ENCODE measurements at regions of chr10 and their contacts with region 1.

Region 1: DNA sequence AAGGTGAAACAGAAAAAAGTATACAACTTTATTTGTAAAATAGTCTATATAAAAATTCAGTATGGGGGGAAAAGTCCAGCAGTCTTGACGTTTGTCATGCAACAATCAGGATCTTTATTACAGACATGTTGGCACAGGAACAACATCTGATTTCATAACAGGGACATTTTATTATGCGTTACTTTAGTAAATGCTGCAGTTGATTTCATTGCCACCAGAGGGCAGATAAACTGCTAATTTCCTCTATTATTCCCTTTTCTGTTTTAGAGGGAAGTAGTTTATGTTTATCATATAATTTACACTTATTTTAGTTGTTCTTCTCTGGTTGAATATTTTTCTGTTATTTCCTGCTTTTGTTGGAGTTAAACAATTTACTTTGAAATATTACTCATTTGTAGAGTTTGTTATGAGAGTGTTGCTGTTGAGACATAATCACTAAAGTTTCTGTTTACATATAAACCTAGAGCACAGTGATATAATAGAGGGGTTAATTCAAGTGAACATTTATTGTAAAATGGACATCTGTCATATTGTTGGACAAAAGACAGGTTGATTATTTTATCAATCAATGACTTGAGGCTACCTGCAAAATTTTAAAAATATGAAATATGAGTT is 3.3 kb downstream of the PLXDC2 start:
- DNase-seq: peak in 1 of 2 donors; percentile 78
- ATAC-seq: no peak
- H3K4me3 ChIP-seq: peak overlapping the region in 8 of 10 donors; percentile 59 to 94 (median 84)
- H3K27ac ChIP-seq: peak overlapping the region in 7 of 10 donors; percentile 2 to 95 (median 53)
- H3K4me1 ChIP-seq: peaks cover 0 to 50% (median 19%) of the 10 kb centered on the region in 9 donors
- H3K27me3 ChIP-seq: peaks cover 0 to 16% (median 2%) of the 10 kb centered on the region in 7 donors
- CTCF ChIP-seq: peak; percentile 75 to 94 (median 85)

Region 2: GRCh38 chr10:19874773-19875172 is 55.2 kb after region 1 on chr10:
- intact Hi-C with region 1: loop called in 1 of 10 experiments (anchors 10 kb)
- DNase-seq: no peak
- ATAC-seq: peak in 1 of 8 donors; percentile 44
- H3K4me3 ChIP-seq: no peak overlapping the region
- H3K27ac ChIP-seq: no peak overlapping the region
- H3K4me1 ChIP-seq: peaks cover 0 to 30% (median 12%) of the 10 kb centered on the region in 9 donors
- H3K27me3 ChIP-seq: no peaks in the 10 kb centered on the region
- CTCF ChIP-seq: no peak

Region 3: GRCh38 chr10:19944911-19945663 is 125.6 kb after region 1 on chr10:
- intact Hi-C with region 1: loop called in 2 of 10 experiments (anchors 5 to 10 kb)
- DNase-seq: peak; percentile 49 to 50
- ATAC-seq: peak; percentile 43 to 89 (median 66)
- H3K4me3 ChIP-seq: no peak overlapping the region
- H3K27ac ChIP-seq: peak overlapping the region in 9 of 10 donors; percentile 1 to 72 (median 47)
- H3K4me1 ChIP-seq: peaks cover 20 to 70% (median 45%) of the 10 kb centered on the region in 9 donors
- H3K27me3 ChIP-seq: no peaks in the 10 kb centered on the region
- CTCF ChIP-seq: no peak

Region 4: DNA sequence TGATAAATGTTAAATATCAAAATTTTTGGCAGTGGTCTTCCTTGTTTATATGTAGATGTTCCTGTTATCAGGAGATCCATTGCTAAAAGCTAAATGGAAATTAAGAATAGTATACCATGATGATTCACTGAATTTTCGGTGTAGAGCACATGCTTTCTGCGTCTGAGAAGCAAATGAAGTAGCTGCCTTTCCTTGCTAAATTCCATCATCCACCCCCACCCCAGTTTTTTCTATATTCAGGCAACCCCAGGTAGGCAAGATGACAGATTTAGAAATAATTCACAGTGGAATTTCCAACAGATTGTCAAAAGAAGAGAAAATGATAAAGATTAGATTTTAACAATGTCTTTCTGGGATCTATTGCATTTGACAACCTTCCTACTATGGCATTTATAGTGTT is 228.6 kb after region 1 on chr10:
- intact Hi-C with region 1: loop called in 1 of 10 experiments (anchors 5 kb)
- DNase-seq: no peak
- ATAC-seq: no peak
- H3K4me3 ChIP-seq: no peak overlapping the region
- H3K27ac ChIP-seq: no peak overlapping the region
- H3K4me1 ChIP-seq: peaks cover 0 to 7% (median 0%) of the 10 kb centered on the region in 9 donors
- H3K27me3 ChIP-seq: no peaks in the 10 kb centered on the region
- CTCF ChIP-seq: no peak

Region 5: GRCh38 chr10:20094226-20094976 is 274.9 kb after region 1 on chr10:
- intact Hi-C with region 1: loop called in 3 of 10 experiments (anchors 5 to 10 kb)
- DNase-seq: no peak
- ATAC-seq: no peak
- H3K4me3 ChIP-seq: no peak overlapping the region
- H3K27ac ChIP-seq: no peak overlapping the region
- H3K4me1 ChIP-seq: peaks cover 0 to 20% (median 9%) of the 10 kb centered on the region in 9 donors
- H3K27me3 ChIP-seq: no peaks in the 10 kb centered on the region
- CTCF ChIP-seq: no peak

Region 6: GRCh38 chr10:20265146-20265545 is 445.6 kb after region 1 on chr10:
- intact Hi-C with region 1: loop called in 1 of 10 experiments (anchors 10 kb)
- DNase-seq: no peak
- ATAC-seq: no peak
- H3K4me3 ChIP-seq: no peak overlapping the region
- H3K27ac ChIP-seq: no peak overlapping the region
- H3K4me1 ChIP-seq: peaks cover 0 to 12% (median 3%) of the 10 kb centered on the region in 9 donors
- H3K27me3 ChIP-seq: no peaks in the 10 kb centered on the region
- CTCF ChIP-seq: no peak

Region 7: DNA sequence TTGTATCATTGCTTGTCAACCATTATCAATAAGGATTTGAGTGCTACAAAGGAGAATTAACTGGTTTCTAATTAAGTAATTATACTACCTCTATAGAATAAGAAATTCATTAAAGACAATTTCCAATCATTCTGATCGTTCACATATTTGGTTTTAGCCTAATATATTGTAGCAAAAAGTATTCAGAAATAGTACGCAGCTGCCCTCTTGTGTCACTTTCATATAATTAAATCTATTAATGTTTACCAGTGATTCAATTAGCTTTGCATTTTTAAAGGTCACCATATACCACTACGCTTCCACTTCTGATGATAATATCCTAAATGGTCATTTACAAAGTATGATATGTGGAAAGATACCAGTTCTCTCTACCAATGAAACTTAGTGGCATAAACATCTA is 949.3 kb after region 1 on chr10:
- intact Hi-C with region 1: loop called in 7 of 10 experiments (anchors 5 to 10 kb)
- DNase-seq: no peak
- ATAC-seq: peak in 2 of 8 donors; percentile 26 to 46
- H3K4me3 ChIP-seq: no peak overlapping the region
- H3K27ac ChIP-seq: no peak overlapping the region
- H3K4me1 ChIP-seq: peaks cover 0 to 16% (median 4%) of the 10 kb centered on the region in 9 donors
- H3K27me3 ChIP-seq: no peaks in the 10 kb centered on the region
- CTCF ChIP-seq: peak; percentile 19 to 74 (median 58)

Measured in heart right ventricle (tissue), 16 donors.